ENCODE measurements at regions of chr1 and their contacts with region 1.

Region 1: GRCh38 chr1:172719694-172720138 is 60.8 kb downstream of the FASLG start:
- DNase-seq: no peak
- ATAC-seq: peak; percentile 77
- H3K4me3 Mint-ChIP-seq: no peak overlapping the region
- H3K27ac Mint-ChIP-seq: peak overlapping the region; percentile 25
- H3K4me1 Mint-ChIP-seq: peaks cover 10% of the 10 kb centered on the region
- H3K27me3 Mint-ChIP-seq: no peaks in the 10 kb centered on the region
- CTCF ChIP-seq: peak; percentile 64

Region 2: DNA sequence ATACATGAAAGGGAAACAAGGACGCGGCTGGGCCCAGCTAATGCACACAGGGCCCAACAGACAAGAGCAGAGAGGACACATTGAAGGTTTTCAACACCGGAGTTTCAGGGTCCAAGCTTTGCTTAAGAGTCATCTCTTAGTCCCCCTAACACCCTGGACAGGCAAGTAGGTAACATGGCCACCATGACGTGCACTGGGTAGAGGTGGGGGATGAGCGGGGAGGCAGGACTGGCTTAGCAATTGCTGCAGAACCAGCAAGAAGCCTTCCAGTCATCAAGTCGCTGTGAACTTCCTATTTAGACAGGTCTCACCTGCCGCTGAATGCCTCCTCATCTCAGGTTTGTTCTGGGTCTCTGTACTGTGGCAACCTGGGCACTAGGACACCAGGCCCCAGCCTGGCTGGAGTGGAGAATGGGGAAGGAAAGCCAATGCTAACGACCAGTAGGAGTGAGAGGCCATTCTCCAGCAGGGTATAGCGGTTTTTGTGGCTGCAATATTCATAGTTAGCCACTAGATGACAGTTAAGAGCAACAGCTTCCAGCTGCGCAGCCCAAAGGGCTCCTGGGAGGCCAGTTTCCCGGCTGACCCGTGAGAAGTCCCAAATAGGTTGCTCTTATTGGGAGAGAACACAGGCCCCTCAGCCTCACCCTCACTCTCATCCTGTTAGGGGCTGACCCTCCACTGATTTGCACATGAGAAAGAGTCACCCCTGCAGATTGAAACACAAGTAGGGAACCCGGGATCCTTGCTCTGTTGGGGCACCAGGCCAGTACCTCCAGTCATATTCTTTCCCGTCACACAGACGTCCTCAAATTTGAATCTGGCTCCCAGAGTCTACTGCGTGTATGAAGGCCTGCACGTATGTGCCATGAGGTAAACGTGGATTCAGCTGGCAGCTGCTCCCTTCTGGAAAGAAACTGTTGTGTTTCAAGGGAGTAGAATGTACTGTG is 269.9 kb before region 1 on chr1:
- CTCF ChIA-PET with region 1: interaction called, 21 read pairs
- POLR2A ChIA-PET with region 1: interaction called, 7 read pairs
- intact Hi-C with region 1: loop called (anchors 1 kb)
- DNase-seq: no peak
- ATAC-seq: peak; percentile 98
- H3K4me3 Mint-ChIP-seq: no peak overlapping the region
- H3K27ac Mint-ChIP-seq: no peak overlapping the region
- H3K4me1 Mint-ChIP-seq: no peaks in the 10 kb centered on the region
- H3K27me3 Mint-ChIP-seq: no peaks in the 10 kb centered on the region
- CTCF ChIP-seq: no peak

Region 3: DNA sequence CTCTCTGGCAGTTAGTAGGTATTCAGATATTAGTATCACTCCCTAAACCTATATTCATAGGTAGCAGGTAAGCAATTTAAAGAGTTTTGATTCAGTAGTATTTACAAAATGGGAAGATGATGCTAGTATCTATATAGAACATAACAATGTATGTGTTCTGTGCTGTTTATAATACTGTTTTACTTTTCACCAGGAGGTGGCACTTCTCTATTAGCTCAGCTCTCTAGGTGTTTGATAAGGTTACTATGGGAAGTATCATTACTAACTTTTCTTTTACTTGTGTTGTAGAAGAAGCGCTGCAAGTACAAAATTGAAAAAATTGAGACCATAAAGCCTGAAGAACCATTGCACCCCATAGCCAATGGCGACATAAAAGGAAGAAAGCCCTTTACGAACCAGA is 110.2 kb before region 1 on chr1:
- CTCF ChIA-PET with region 1: interaction called, 76 read pairs
- POLR2A ChIA-PET with region 1: no interaction called
- intact Hi-C with region 1: loop called (anchors 1 kb)
- DNase-seq: no peak
- ATAC-seq: peak; percentile 25
- H3K4me3 Mint-ChIP-seq: no peak overlapping the region
- H3K27ac Mint-ChIP-seq: no peak overlapping the region
- H3K4me1 Mint-ChIP-seq: no peaks in the 10 kb centered on the region
- H3K27me3 Mint-ChIP-seq: no peaks in the 10 kb centered on the region
- CTCF ChIP-seq: no peak

Region 4: GRCh38 chr1:172704001-172704400 is 15.7 kb before region 1 on chr1:
- CTCF ChIA-PET with region 1: no interaction called
- POLR2A ChIA-PET with region 1: no interaction called
- intact Hi-C with region 1: no loop called
- DNase-seq: no peak
- ATAC-seq: no peak
- H3K4me3 Mint-ChIP-seq: no peak overlapping the region
- H3K27ac Mint-ChIP-seq: no peak overlapping the region
- H3K4me1 Mint-ChIP-seq: peaks cover 13% of the 10 kb centered on the region
- H3K27me3 Mint-ChIP-seq: no peaks in the 10 kb centered on the region
- CTCF ChIP-seq: no peak